ENCODE measurements at regions of chr19 and their contacts with region 1.

Region 1: GRCh38 chr19:35468637-35469036 is 20.6 kb downstream of the FFAR2 start:
- DNase-seq: peak; percentile 51
- ATAC-seq: peak; percentile 100
- H3K4me3 Mint-ChIP-seq: no peak overlapping the region
- H3K27ac Mint-ChIP-seq: no peak overlapping the region
- H3K4me1 Mint-ChIP-seq: peaks cover 14% of the 10 kb centered on the region
- H3K27me3 Mint-ChIP-seq: no peaks in the 10 kb centered on the region
- CTCF ChIP-seq: peak; percentile 39

Region 2: DNA sequence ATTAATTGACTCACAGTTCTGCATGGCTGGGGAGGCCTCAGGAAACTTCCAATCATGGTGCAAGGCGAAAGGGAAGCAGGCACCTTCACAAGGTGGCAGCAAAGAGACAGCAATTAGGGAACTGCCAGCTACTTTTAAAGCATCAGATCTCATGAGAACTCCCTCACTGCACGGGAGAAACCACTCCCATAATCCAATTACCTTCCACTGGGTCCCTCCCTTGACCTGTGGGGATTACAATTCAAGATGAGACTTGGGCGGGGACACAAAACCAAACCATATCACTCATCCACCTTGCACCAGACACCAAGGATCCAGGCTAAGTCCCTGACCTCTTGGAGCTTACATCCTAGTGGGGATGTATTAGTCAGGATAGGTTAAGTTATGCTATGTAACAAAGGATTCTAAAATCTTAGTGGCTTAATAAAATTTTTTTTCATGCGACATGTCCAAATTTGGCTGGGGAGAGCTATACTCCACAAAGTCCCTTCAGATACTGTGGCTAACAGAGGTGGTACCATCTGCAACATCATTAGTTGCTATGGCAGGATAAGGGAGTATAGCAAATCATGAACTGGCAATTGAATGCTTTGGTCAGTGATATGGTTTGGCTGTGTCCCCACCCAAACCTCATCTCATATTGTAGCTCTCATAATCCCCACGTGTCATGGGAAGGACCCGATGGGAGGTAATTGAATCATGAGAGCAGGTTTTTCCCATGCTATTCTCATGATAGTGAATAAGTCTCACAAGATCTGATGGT is 231.8 kb before region 1 on chr19:
- CTCF ChIA-PET with region 1: no interaction called
- POLR2A ChIA-PET with region 1: no interaction called
- intact Hi-C with region 1: loop called (anchors 1 kb)
- DNase-seq: peak; percentile 9
- ATAC-seq: peak; percentile 50
- H3K4me3 Mint-ChIP-seq: no peak overlapping the region
- H3K27ac Mint-ChIP-seq: no peak overlapping the region
- H3K4me1 Mint-ChIP-seq: peaks cover 24% of the 10 kb centered on the region
- H3K27me3 Mint-ChIP-seq: no peaks in the 10 kb centered on the region
- CTCF ChIP-seq: no peak

Region 3: GRCh38 chr19:35357867-35358573 is 110.6 kb before region 1 on chr19 and contains the start of gene FFAR3:
- CTCF ChIA-PET with region 1: interaction called, 99 read pairs
- POLR2A ChIA-PET with region 1: interaction called, 15 read pairs
- intact Hi-C with region 1: no loop called
- DNase-seq: no peak
- ATAC-seq: no peak
- H3K4me3 Mint-ChIP-seq: no peak within 1 kb of the TSS
- H3K27ac Mint-ChIP-seq: no peak within 1 kb of the TSS
- H3K4me1 Mint-ChIP-seq: peaks cover 5% of the 10 kb centered on the region
- H3K27me3 Mint-ChIP-seq: peaks cover 8% of the 10 kb centered on the region
- CTCF ChIP-seq: no peak
- total RNA-seq, gene FFAR3: 0.16 TPM in 1 of 2 replicates, not detected in the other

Region 4: GRCh38 chr19:35421362-35421761 is 47.3 kb before region 1 on chr19:
- CTCF ChIA-PET with region 1: interaction called, 15 read pairs
- POLR2A ChIA-PET with region 1: no interaction called
- intact Hi-C with region 1: loop called (anchors 1 kb)
- DNase-seq: no peak
- ATAC-seq: no peak
- H3K4me3 Mint-ChIP-seq: no peak overlapping the region
- H3K27ac Mint-ChIP-seq: no peak overlapping the region
- H3K4me1 Mint-ChIP-seq: peaks cover 11% of the 10 kb centered on the region
- H3K27me3 Mint-ChIP-seq: peaks cover 4% of the 10 kb centered on the region
- CTCF ChIP-seq: no peak

Measured in activated B cell treated with CpG ODN at 0.5 μM for 24 hours (primary cell).